CD14-positive monocyte (primary cell): ENCODE measurements at regions of chr4 and their contacts with region 1.

Region 1: DNA sequence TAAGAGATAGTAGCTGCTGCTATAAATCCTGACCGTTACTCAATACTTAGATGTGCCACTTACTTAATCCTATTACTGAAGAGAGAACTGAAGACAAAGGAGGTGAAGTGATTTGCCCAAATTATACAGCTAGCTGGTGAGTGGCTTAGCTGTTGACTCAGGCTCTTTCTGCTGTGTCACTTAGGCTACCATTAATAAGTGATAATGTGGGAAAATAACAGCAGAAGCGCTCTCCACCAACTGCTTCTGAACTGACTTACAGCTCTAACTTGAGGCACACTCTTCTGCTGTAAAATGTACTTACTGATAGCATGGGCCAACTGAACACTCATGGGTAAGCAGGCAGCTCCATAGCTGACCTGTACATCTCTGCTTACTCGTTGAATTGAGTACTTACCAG is 7.5 kb upstream of the KLHL5 start:
- DNase-seq: no peak
- H3K4me3 ChIP-seq: no peak overlapping the region
- H3K4me3 Mint-ChIP-seq: no peak overlapping the region
- H3K27ac ChIP-seq: no peak overlapping the region
- H3K27ac Mint-ChIP-seq: no peak overlapping the region
- H3K4me1 ChIP-seq: no peaks in the 10 kb centered on the region
- H3K4me1 Mint-ChIP-seq: peaks cover 7% of the 10 kb centered on the region
- H3K27me3 ChIP-seq: no peaks in the 10 kb centered on the region
- H3K27me3 Mint-ChIP-seq: no peaks in the 10 kb centered on the region
- CTCF ChIP-seq: no peak

Region 2: DNA sequence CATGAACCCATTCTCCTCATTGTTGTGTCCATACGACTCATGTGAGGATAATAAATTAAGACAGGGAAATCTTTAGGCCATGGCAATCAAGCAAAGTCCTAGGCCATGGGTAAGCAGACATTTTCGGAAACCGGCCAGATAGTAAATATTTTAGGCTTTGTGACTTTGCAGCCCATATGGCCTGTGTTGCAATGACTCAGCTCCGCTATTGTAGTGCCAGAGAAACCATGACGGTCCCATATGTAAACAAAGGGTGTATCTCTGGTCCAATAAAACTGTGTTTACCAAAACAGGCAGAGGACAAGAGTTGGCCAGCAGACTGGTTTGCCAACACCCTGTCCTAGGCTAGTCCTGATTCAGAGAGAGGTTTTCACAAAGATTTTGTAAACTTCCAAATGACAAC is 181.9 kb before region 1 on chr4:
- intact Hi-C with region 1: loop called in 1 of 2 experiments (anchors 10 kb)
- DNase-seq: no peak
- H3K4me3 ChIP-seq: no peak overlapping the region
- H3K4me3 Mint-ChIP-seq: no peak overlapping the region
- H3K27ac ChIP-seq: no peak overlapping the region
- H3K27ac Mint-ChIP-seq: no peak overlapping the region
- H3K4me1 ChIP-seq: peaks cover 15 to 19% of the 10 kb centered on the region in 2 donors
- H3K4me1 Mint-ChIP-seq: peaks cover 33% of the 10 kb centered on the region
- H3K27me3 ChIP-seq: no peaks in the 10 kb centered on the region
- H3K27me3 Mint-ChIP-seq: no peaks in the 10 kb centered on the region
- CTCF ChIP-seq: no peak

Region 3: DNA sequence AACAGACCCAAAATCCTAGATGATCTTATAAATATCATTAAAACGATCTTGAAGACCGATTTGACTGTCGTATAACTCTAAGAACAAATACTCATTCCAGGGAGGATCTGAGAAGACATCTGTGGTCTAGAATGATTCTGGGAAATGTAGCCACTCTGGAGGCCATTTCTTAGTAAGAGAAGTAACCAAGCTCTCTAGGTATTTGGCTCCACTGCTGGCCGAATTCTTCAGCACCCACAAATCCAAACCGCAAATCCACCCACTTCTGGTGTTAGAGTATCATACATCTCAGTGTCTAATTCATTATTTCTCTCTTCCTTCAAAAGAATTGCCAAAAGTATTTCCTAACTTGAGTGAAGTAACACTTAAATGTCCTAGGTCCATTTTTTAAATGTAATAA is 31.4 kb after region 1 on chr4:
- intact Hi-C with region 1: loop called in 1 of 2 experiments (anchors 5 kb)
- DNase-seq: no peak
- H3K4me3 ChIP-seq: no peak overlapping the region
- H3K4me3 Mint-ChIP-seq: no peak overlapping the region
- H3K27ac ChIP-seq: no peak overlapping the region
- H3K27ac Mint-ChIP-seq: no peak overlapping the region
- H3K4me1 ChIP-seq: no peaks in the 10 kb centered on the region
- H3K4me1 Mint-ChIP-seq: no peaks in the 10 kb centered on the region
- H3K27me3 ChIP-seq: no peaks in the 10 kb centered on the region
- H3K27me3 Mint-ChIP-seq: no peaks in the 10 kb centered on the region
- CTCF ChIP-seq: no peak

Region 4: GRCh38 chr4:39103291-39103690 is 48.8 kb after region 1 on chr4:
- intact Hi-C with region 1: no loop called
- DNase-seq: no peak
- H3K4me3 ChIP-seq: no peak overlapping the region
- H3K4me3 Mint-ChIP-seq: no peak overlapping the region
- H3K27ac ChIP-seq: no peak overlapping the region
- H3K27ac Mint-ChIP-seq: no peak overlapping the region
- H3K4me1 ChIP-seq: no peaks in the 10 kb centered on the region
- H3K4me1 Mint-ChIP-seq: no peaks in the 10 kb centered on the region
- H3K27me3 ChIP-seq: no peaks in the 10 kb centered on the region
- H3K27me3 Mint-ChIP-seq: peaks cover 0 to 1% (median 0%) of the 10 kb centered on the region in 3 donors
- CTCF ChIP-seq: no peak